ENCODE measurements at regions of chr3 and their contacts with region 1.

Region 1: GRCh38 chr3:186946756-186947375 is 16.5 kb downstream of the ST6GAL1 start:
- DNase-seq: no peak
- ATAC-seq: no peak
- H3K4me3 ChIP-seq: no peak overlapping the region
- H3K4me3 Mint-ChIP-seq: no peak overlapping the region
- H3K27ac ChIP-seq: no peak overlapping the region
- H3K27ac Mint-ChIP-seq: peak overlapping the region in 1 of 2 donors; percentile 62
- H3K4me1 ChIP-seq: peaks cover 0 to 38% of the 10 kb centered on the region in 2 experiments
- H3K4me1 Mint-ChIP-seq: peaks cover 54 to 76% (median 70%) of the 10 kb centered on the region in 3 donors
- H3K27me3 ChIP-seq: no peaks in the 10 kb centered on the region
- H3K27me3 Mint-ChIP-seq: no peaks in the 10 kb centered on the region

Region 2: DNA sequence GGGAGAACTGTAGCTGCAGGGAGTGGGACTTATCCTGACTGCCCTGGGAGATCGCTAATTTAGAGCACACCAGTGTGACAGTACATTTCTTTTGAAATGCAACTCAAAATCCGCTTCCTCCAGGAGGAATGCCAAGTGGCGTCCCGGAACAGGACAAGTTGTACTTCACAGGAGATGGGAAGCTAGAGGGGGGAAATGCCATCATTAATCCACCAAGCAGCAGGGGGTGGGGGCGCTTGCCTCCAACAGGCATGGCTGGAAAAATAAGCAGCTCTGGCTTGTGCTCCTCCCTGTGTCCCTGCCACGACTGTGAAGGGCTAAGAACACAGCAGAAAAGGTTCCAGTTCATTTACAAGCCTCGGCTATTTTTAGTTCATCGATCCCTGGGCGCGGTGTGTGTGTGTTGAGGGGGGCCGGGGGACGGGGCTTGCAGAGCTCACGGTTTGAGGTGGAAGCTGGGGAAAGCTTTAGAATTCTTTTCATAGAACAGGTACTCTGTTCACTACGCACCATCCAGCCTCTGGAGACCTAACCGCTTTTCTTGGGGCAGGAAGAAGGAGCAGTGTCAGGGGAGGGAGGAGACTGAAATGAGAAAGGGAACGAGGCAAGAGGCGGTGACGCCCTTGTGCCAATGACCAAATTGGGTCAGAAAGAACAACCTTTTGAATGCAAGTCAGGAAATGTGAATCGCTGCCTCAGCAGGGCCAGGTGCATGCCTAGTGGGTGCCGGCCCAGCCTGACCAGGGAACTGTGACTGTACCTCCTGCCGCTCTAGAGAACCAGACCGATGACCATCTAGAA is 533.1 kb before region 1 on chr3:
- CTCF ChIA-PET with region 1: no interaction called
- POLR2A ChIA-PET with region 1: no interaction called
- DNase-seq: peak in 7 of 35 experiments; percentile 3 to 18 (median 5)
- ATAC-seq: peak in 3 of 4 experiments; percentile 46 to 62 (median 60)
- H3K4me3 ChIP-seq: peak overlapping the region; percentile 32 to 66
- H3K4me3 Mint-ChIP-seq: peak overlapping the region; percentile 67 to 71 (median 68)
- H3K27ac ChIP-seq: no peak overlapping the region
- H3K27ac Mint-ChIP-seq: peak overlapping the region in 1 of 2 donors; percentile 59
- H3K4me1 ChIP-seq: peaks cover 3 to 9% of the 10 kb centered on the region in 2 experiments
- H3K4me1 Mint-ChIP-seq: peaks cover 17 to 21% (median 20%) of the 10 kb centered on the region in 3 donors
- H3K27me3 ChIP-seq: peaks cover 0 to 15% of the 10 kb centered on the region in 2 experiments
- H3K27me3 Mint-ChIP-seq: peaks cover 10 to 12% of the 10 kb centered on the region in 2 donors

Region 3: DNA sequence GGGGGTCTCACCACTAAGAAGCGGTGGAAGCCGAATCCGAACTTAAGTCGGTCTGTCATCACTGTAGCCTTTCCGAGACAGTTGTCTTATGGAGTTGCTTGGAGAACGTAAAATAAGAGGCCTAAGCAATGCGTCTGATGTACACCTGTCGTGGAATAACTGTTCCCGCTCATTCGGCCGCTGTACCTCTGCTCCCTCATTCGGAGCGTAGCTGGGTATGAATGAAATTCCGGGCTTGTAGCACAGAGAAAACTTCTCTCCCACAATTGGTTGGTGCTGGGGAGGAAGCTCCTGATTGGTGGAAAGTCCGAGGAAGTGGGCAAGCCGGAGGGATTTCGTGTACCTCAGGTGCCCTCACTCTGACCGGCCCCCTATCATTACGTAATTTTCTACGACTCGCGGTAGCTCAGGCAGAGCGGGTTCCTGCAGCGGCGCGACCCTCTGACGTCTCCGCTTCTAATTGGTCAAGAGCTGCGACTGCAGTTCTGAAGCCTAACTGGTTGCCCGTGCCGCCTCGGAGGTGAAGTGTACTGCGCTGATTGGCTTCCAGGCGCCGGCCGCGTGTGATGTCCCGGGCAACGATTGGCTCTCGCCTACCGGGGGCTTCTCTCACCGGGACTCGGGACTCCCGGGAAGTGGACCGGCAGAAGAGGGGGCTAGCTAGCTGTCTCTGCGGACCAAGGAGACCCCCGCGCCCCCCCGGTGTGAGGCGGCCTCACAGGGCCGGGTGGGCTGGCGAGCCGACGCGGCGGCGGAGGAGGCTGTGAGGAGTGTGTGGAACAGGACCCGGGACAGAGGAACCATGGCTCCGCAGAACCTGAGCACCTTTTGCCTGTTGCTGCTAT is 376.5 kb before region 1 on chr3 and contains the start of gene DNAJB11:
- CTCF ChIA-PET with region 1: interaction called in 1 of 2 experiments, 10 read pairs
- POLR2A ChIA-PET with region 1: interaction called in 1 of 2 experiments, 6 read pairs
- DNase-seq: peak; percentile 87 to 100 (median 99)
- ATAC-seq: peak; percentile 85 to 87 (median 86)
- H3K4me3 ChIP-seq: peak within 1 kb of the TSS; percentile 77 to 88
- H3K4me3 Mint-ChIP-seq: peak within 1 kb of the TSS; percentile 88 to 92 (median 90)
- H3K27ac ChIP-seq: peak within 1 kb of the TSS; percentile 80
- H3K27ac Mint-ChIP-seq: peak within 1 kb of the TSS; percentile 96 to 98
- H3K4me1 ChIP-seq: peaks cover 25 to 36% of the 10 kb centered on the region in 2 experiments
- H3K4me1 Mint-ChIP-seq: peaks cover 63 to 68% (median 64%) of the 10 kb centered on the region in 3 donors
- H3K27me3 ChIP-seq: no peaks in the 10 kb centered on the region
- H3K27me3 Mint-ChIP-seq: no peaks in the 10 kb centered on the region
- total RNA-seq, gene DNAJB11: 28.7 to 65.4 (median 31.7) TPM

Region 4: DNA sequence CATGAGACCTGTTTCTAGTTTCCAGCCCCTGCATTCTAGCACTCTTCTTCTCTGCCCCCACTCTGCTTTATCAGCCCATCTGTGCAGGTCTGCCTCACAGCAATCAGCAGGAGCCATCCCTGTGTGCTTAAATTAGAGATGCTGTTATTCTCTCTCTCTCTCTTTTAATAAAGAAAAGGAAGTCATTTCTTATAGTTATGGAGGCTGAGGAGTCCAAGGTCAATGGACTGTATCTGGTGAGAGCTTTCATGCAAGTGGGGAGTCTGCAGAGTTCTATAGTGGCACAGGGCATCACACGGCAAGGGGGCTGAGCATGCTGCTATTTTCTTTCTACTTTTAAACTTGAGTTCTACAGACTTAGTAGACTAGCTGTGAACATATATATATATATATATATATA is 21.0 kb before region 1 on chr3:
- CTCF ChIA-PET with region 1: no interaction called
- POLR2A ChIA-PET with region 1: no interaction called
- DNase-seq: no peak
- ATAC-seq: no peak
- H3K4me3 ChIP-seq: no peak overlapping the region
- H3K4me3 Mint-ChIP-seq: no peak overlapping the region
- H3K27ac ChIP-seq: no peak overlapping the region
- H3K27ac Mint-ChIP-seq: peak overlapping the region in 1 of 2 donors; percentile 50
- H3K4me1 ChIP-seq: peaks cover 0 to 8% of the 10 kb centered on the region in 2 experiments
- H3K4me1 Mint-ChIP-seq: peaks cover 7 to 11% (median 9%) of the 10 kb centered on the region in 3 donors
- H3K27me3 ChIP-seq: no peaks in the 10 kb centered on the region
- H3K27me3 Mint-ChIP-seq: no peaks in the 10 kb centered on the region

Region 5: GRCh38 chr3:186965141-186965879 is 18.4 kb after region 1 on chr3:
- CTCF ChIA-PET with region 1: interaction called in 1 of 2 experiments, 6 read pairs
- POLR2A ChIA-PET with region 1: interaction called in 1 of 2 experiments, 10 read pairs
- DNase-seq: no peak
- ATAC-seq: no peak
- H3K4me3 ChIP-seq: no peak overlapping the region
- H3K4me3 Mint-ChIP-seq: no peak overlapping the region
- H3K27ac ChIP-seq: no peak overlapping the region
- H3K27ac Mint-ChIP-seq: peak overlapping the region; percentile 61 to 75
- H3K4me1 ChIP-seq: peaks cover 0 to 12% of the 10 kb centered on the region in 2 experiments
- H3K4me1 Mint-ChIP-seq: peaks cover 48 to 74% (median 57%) of the 10 kb centered on the region in 3 donors
- H3K27me3 ChIP-seq: no peaks in the 10 kb centered on the region
- H3K27me3 Mint-ChIP-seq: no peaks in the 10 kb centered on the region

Region 6: GRCh38 chr3:186976837-186977750 is 30.2 kb after region 1 on chr3:
- CTCF ChIA-PET with region 1: no interaction called
- POLR2A ChIA-PET with region 1: no interaction called
- DNase-seq: no peak
- ATAC-seq: no peak
- H3K4me3 ChIP-seq: no peak overlapping the region
- H3K4me3 Mint-ChIP-seq: no peak overlapping the region
- H3K27ac ChIP-seq: no peak overlapping the region
- H3K27ac Mint-ChIP-seq: peak overlapping the region in 1 of 2 donors; percentile 22
- H3K4me1 ChIP-seq: no peaks in the 10 kb centered on the region
- H3K4me1 Mint-ChIP-seq: peaks cover 23 to 41% (median 40%) of the 10 kb centered on the region in 3 donors
- H3K27me3 ChIP-seq: no peaks in the 10 kb centered on the region
- H3K27me3 Mint-ChIP-seq: no peaks in the 10 kb centered on the region

Region 7: DNA sequence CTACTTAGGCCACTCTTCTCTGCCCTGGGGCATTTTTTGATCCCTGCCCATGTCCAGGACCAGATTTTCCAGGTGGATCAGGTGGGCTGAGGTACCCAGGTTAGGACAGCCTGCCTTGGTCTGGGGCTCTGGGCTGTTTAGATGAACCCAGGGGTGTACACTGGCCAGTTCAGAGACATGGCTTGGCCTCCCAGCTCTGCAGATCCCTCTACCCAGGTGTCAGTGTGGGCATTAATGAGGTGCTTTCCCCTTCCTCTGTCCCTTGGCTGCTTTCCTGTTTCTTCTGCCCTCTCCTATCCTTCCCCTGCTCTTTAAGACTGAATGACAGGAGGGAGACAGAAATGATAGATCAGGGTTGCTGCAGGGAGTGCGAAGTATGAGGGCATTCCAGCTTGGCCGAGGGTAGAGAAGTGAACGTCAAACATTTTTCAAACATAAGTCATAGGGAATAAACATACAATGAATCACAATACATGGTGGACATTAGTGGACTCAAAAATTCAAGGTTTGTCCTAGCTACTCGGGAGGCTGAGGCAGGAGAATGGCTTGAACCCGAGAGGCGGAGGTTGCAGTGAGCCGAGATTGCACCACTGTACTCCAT is 280.9 kb after region 1 on chr3:
- CTCF ChIA-PET with region 1: no interaction called
- POLR2A ChIA-PET with region 1: no interaction called
- DNase-seq: no peak
- ATAC-seq: no peak
- H3K4me3 ChIP-seq: no peak overlapping the region
- H3K4me3 Mint-ChIP-seq: no peak overlapping the region
- H3K27ac ChIP-seq: no peak overlapping the region
- H3K27ac Mint-ChIP-seq: no peak overlapping the region
- H3K4me1 ChIP-seq: no peaks in the 10 kb centered on the region
- H3K4me1 Mint-ChIP-seq: no peaks in the 10 kb centered on the region
- H3K27me3 ChIP-seq: peaks cover 0 to 28% of the 10 kb centered on the region in 2 experiments
- H3K27me3 Mint-ChIP-seq: peaks cover 12 to 19% of the 10 kb centered on the region in 2 donors

Measured in T-cell (primary cell).